Posterior cingulate gyrus (tissue), 11 donors: ENCODE measurements at regions of chr1 and their contacts with region 1.

Region 1: GRCh38 chr1:150515328-150516048 is at the start of gene FALEC:
- DNase-seq: peak; percentile 94 to 100 (median 96)

Region 2: DNA sequence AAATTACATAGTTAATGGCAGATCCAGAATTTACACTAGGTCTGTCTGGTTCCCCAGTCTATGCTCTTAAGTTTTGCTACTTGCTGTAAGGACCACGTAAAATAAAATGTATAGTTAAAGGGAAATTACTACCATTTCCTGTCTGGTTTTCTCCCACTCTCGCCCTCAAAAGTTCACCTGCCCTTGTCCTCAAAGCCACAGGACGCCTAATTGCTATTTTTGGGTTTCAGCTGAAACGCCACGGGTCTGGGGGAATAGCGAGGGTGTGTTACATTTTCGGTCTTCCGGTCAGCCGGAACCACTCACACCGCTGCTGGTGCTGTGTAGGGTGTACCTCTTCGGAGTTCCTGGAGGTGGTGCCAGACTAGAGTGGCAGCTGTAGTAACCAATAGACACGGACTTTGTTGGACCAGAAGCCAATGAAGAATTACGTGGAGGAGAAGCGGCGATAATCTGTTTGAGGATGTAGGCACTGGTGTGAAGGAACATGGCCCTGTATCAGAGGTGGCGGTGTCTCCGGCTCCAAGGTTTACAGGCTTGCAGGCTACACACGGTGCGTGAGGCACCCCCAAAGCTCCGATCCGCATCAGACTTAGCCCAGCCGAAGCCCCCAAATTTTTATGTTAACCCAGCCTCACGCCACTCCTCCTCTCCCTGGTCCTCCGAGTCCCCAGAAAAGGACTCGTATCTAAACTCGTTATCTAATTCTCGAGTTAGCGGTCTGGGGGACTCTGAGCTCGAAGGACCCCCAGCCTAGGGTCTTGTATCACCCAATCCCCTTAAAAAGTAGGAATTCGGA is 28.3 kb before region 1 on chr1 and contains the start of gene TARS2:
- intact Hi-C with region 1: loop called (anchors 1 kb)
- DNase-seq: peak; percentile 78 to 98 (median 92)